ENCODE measurements at regions of chr16 and their contacts with region 1.

Region 1: DNA sequence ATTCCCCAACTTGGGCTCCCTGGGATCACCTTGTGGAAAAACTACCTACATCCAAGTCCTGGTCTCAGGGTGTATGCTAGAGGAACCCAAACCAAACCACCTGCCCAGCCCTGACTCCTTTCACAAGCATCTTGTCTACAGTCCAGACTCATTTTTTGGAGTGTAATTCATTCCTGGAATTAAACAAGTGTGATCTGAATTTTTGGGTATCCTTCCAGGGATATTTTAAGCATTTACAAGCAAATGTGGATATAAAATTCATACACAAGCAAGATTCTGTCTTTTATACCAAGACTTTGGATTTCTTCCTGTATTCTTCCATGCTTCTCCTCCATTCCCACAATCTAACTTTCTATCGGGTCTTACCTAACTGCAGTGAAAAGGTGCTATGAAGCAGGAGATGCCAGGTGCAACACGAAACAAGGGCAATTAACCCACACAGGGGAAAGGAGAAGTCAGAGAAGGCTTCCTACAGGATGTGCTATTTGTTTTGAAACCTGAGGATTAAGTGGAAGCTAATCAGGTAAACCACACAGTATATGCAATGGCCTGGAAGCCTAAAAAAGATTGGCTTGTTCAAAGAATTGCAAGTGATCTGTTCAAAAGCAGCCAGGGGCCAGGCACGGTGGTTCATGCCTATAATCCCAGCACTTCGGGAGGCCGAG is 417.2 kb upstream of the C16orf82 start:
- DNase-seq: no peak
- H3K4me3 ChIP-seq: no peak overlapping the region
- H3K27ac ChIP-seq: no peak overlapping the region
- H3K4me1 ChIP-seq: no peaks in the 10 kb centered on the region
- H3K27me3 ChIP-seq: no peaks in the 10 kb centered on the region
- CTCF ChIP-seq: no peak

Region 2: DNA sequence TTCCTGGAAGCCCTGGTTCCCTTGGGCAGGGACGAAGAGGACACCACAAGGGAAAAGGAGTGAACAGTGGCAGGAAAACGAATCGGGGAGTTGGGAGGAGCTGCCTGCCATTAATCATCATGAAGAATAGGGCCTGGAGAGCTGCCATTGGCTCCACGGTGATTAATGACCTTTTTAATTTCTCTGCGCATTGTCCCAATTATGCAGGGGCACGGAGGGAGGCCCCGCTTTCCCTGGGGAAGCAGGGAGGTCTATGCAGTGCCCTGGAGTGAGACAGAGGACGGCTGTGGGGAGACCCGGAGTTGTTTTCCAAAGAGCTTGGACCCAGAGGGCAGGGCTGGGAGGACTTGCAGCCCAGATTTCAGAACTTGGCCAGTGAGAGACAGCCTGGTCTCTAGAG is 78.3 kb after region 1 on chr16:
- intact Hi-C with region 1: loop called (anchors 10 kb)
- DNase-seq: no peak
- H3K4me3 ChIP-seq: no peak overlapping the region
- H3K27ac ChIP-seq: no peak overlapping the region
- H3K4me1 ChIP-seq: no peaks in the 10 kb centered on the region
- H3K27me3 ChIP-seq: no peaks in the 10 kb centered on the region
- CTCF ChIP-seq: no peak

Measured in ascending aorta (tissue), 2 donors.